ENCODE measurements at regions of chr3 and their contacts with region 1.

Region 1: GRCh38 chr3:157130467-157131251 is 29.3 kb downstream of the CCNL1 start:
- DNase-seq: peak; percentile 47 to 61
- ATAC-seq: peak; percentile 13 to 53 (median 42)
- H3K4me3 ChIP-seq: peak overlapping the region in 8 of 10 donors; percentile 0 to 49 (median 28)
- H3K27ac ChIP-seq: peak overlapping the region; percentile 65 to 90 (median 83)
- H3K4me1 ChIP-seq: peaks cover 0 to 82% (median 57%) of the 10 kb centered on the region in 9 donors
- H3K27me3 ChIP-seq: no peaks in the 10 kb centered on the region
- CTCF ChIP-seq: peak; percentile 50 to 80 (median 72)

Region 2: DNA sequence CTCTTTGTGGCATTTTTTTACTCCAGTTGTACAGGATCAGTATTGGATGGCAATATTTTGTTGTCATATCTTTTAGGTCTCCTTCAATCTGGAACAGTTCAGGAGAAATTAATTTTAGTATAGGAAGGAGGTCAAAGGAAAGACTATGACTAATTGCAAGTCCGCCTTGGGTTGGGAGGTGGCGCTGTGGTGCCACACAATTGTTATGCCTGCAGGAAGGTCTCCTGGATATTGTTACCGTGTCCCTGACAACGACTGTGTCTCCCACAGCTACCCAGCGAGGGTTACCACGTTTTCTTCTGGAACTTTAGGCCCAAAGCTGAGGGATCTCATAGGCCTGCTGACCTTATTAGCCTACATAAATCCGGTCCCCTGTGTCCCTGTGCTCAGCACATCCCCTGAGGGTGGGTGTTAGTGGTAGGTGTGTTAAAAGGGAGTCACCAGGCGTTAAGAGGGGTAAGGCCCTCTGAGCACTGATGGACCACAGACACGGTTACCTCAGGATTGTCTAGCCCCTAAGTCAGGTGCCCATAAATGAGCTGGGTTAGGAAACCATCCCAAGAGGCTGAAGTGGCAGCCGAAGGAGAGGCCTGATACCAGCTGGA is 978.7 kb before region 1 on chr3:
- intact Hi-C with region 1: loop called in 5 of 10 experiments (anchors 5 to 10 kb)
- DNase-seq: peak; percentile 53 to 69
- ATAC-seq: peak; percentile 39 to 81 (median 76)
- H3K4me3 ChIP-seq: no peak overlapping the region
- H3K27ac ChIP-seq: peak overlapping the region in 1 of 10 donors; percentile 73
- H3K4me1 ChIP-seq: peaks cover 6 to 42% (median 26%) of the 10 kb centered on the region in 9 donors
- H3K27me3 ChIP-seq: no peaks in the 10 kb centered on the region
- CTCF ChIP-seq: peak; percentile 34 to 84 (median 78)

Region 3: GRCh38 chr3:156554842-156555687 is 575.6 kb before region 1 on chr3 and contains the start of gene SSR3:
- intact Hi-C with region 1: loop called in 1 of 10 experiments (anchors 10 kb)
- DNase-seq: peak; percentile 99
- ATAC-seq: peak; percentile 99 to 100 (median 100)
- H3K4me3 ChIP-seq: peak within 1 kb of the TSS; percentile 63 to 96 (median 80)
- H3K27ac ChIP-seq: peak within 1 kb of the TSS; percentile 76 to 97 (median 92)
- H3K4me1 ChIP-seq: peaks cover 0 to 64% (median 45%) of the 10 kb centered on the region in 9 donors
- H3K27me3 ChIP-seq: no peaks in the 10 kb centered on the region
- CTCF ChIP-seq: peak in 5 of 9 donors; percentile 11 to 41 (median 25)
- total RNA-seq, gene SSR3: 172 to 256 (median 216) TPM

Region 4: GRCh38 chr3:156681002-156681401 is 449.7 kb before region 1 on chr3:
- intact Hi-C with region 1: loop called in 3 of 10 experiments (anchors 5 kb)
- DNase-seq: peak in 1 of 2 donors; percentile 82
- ATAC-seq: peak; percentile 74 to 96 (median 86)
- H3K4me3 ChIP-seq: peak overlapping the region in 2 of 10 donors; percentile 8 to 17
- H3K27ac ChIP-seq: peak overlapping the region; percentile 12 to 79 (median 62)
- H3K4me1 ChIP-seq: peaks cover 10 to 100% (median 89%) of the 10 kb centered on the region in 9 donors
- H3K27me3 ChIP-seq: no peaks in the 10 kb centered on the region
- CTCF ChIP-seq: no peak

Region 5: GRCh38 chr3:156816800-156817645 is 313.6 kb before region 1 on chr3:
- intact Hi-C with region 1: loop called in 4 of 10 experiments (anchors 5 to 10 kb)
- DNase-seq: peak; percentile 74 to 88
- ATAC-seq: peak; percentile 90 to 96 (median 93)
- H3K4me3 ChIP-seq: peak overlapping the region; percentile 54 to 73 (median 64)
- H3K27ac ChIP-seq: peak overlapping the region; percentile 79 to 94 (median 82)
- H3K4me1 ChIP-seq: peaks cover 0 to 28% (median 17%) of the 10 kb centered on the region in 9 donors
- H3K27me3 ChIP-seq: no peaks in the 10 kb centered on the region
- CTCF ChIP-seq: peak in 3 of 9 donors; percentile 12 to 41 (median 26)

Region 6: GRCh38 chr3:156837115-156837514 is 293.5 kb before region 1 on chr3:
- intact Hi-C with region 1: loop called in 1 of 10 experiments (anchors 10 kb)
- DNase-seq: no peak
- ATAC-seq: no peak
- H3K4me3 ChIP-seq: no peak overlapping the region
- H3K27ac ChIP-seq: no peak overlapping the region
- H3K4me1 ChIP-seq: no peaks in the 10 kb centered on the region
- H3K27me3 ChIP-seq: no peaks in the 10 kb centered on the region
- CTCF ChIP-seq: no peak

Region 7: GRCh38 chr3:156983559-156983958 is 147.1 kb before region 1 on chr3:
- intact Hi-C with region 1: no loop called
- DNase-seq: no peak
- ATAC-seq: no peak
- H3K4me3 ChIP-seq: no peak overlapping the region
- H3K27ac ChIP-seq: no peak overlapping the region
- H3K4me1 ChIP-seq: no peaks in the 10 kb centered on the region
- H3K27me3 ChIP-seq: no peaks in the 10 kb centered on the region
- CTCF ChIP-seq: no peak

Region 8: DNA sequence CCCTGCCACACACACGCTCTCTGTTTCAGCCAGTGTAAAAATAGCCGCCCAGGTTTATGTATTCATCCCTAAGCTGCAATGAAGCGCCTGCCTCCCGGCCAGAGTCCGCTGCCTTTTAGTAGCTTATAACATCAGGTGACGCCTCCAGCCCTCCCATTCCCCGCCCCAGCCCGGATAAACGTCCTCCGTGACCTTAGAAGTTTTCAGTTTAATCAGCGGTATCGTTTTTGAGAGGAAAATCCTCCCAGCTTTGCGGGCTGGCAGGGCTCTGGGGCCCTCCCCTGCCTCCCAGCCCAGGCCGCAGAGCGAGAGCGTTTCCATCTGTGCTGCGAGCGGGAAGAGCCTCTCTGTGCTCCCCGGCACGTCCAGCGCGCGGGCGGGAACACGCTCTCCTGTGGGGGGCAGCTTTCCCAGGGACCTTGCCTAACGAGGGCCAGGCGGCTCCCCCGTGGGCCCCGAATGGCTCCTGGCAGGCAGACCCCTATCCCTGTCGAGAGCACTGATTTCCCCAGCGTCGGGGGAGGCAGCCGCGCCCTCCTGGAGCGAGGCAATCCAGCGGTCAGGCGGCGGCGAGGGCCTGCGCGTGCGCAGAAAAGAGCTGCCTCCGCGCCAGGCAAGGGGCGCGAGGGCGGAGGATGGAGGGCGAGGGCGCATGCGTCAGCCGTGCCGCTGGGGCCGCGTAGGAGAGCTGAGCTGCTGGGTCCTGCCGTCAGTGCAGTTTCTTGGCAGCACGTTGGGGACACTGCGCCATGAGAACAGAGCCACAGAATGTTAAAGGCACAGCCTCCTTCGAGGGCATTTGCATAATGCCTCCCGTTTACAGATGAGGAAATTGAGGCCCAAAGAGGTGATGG is 41.8 kb before region 1 on chr3:
- intact Hi-C with region 1: loop called in 9 of 10 experiments (anchors 1 to 5 kb)
- DNase-seq: peak; percentile 96 to 98
- ATAC-seq: peak; percentile 81 to 93 (median 90)
- H3K4me3 ChIP-seq: peak overlapping the region; percentile 47 to 71 (median 62)
- H3K27ac ChIP-seq: peak overlapping the region; percentile 96 to 100 (median 99)
- H3K4me1 ChIP-seq: peaks cover 3 to 80% (median 58%) of the 10 kb centered on the region in 9 donors
- H3K27me3 ChIP-seq: no peaks in the 10 kb centered on the region
- CTCF ChIP-seq: peak in 5 of 9 donors; percentile 11 to 44 (median 29)